ENCODE measurements at regions of chr7 and their contacts with region 1.

Region 1: GRCh38 chr7:116227678-116228239 is 17.4 kb downstream of the TES start:
- DNase-seq: peak; percentile 79
- H3K4me3 ChIP-seq: no peak overlapping the region
- H3K27ac ChIP-seq: peak overlapping the region; percentile 57
- H3K4me1 ChIP-seq: peaks cover 55% of the 10 kb centered on the region
- H3K27me3 ChIP-seq: no peaks in the 10 kb centered on the region
- CTCF ChIP-seq: no peak

Region 2: DNA sequence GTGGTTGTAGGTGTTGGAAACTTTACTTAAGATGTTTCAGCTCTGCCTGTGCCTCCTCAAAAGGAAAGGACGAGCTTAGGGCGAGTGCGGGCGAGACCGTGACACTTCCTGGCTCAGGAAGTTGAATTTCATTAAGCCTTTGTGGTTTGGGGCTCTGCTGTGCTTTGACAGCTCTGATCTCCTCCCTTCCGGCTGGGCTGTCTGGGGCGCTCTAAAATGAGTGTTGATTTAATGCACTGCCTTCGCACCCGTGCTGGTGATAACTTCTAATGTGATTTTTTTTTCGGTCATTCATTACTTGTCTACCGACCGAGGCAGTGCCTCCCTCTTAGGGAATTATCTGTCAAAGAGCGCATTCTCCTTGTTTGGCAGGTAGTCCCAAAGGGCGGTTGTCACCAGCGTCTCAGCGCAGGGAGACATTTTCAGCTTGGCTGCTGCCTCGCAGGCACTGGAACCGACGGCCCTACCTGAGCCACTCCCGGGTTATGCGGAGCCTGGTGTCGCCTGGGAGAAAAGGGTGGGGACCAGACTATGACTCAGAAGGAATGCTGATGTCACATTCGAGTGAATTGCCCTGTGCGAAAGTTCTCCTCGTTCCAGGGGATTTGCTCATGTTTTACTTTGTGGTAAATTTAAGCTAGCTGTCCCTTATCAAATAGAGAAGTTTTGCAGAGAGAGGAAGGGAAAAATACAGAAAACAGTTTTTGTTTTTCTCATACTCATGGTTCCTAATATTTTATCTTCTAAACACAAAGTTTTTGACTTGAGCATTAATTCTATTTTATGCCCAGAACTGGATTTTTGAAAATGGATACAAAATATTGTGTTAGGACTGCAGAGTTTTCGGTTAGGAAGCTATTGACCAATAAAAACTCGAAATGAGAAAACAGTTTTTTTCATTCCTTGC is 16.5 kb before region 1 on chr7:
- CTCF ChIA-PET with region 1: no interaction called
- dilution Hi-C with region 1: no loop called
- in situ Hi-C with region 1: no loop called
- intact Hi-C with region 1: loop called (anchors 1 kb)
- DNase-seq: peak; percentile 91
- H3K4me3 ChIP-seq: peak overlapping the region; percentile 85 to 98 (median 91)
- H3K27ac ChIP-seq: peak overlapping the region; percentile 99
- H3K4me1 ChIP-seq: peaks cover 36% of the 10 kb centered on the region
- H3K27me3 ChIP-seq: no peaks in the 10 kb centered on the region
- CTCF ChIP-seq: no peak